HCT116 (cell line): ENCODE measurements at regions of chr4 and their contacts with region 1.

Region 1: GRCh38 chr4:85798012-85798770 is 323.2 kb downstream of the ARHGAP24 start:
- DNase-seq: no peak
- ATAC-seq: no peak
- H3K4me3 ChIP-seq: no peak overlapping the region
- H3K27ac ChIP-seq: no peak overlapping the region
- H3K4me1 ChIP-seq: peaks cover 0 to 4% of the 10 kb centered on the region in 2 experiments; a peak in 3 of 4 replicates
- H3K27me3 ChIP-seq: no peaks in the 10 kb centered on the region
- CTCF ChIP-seq: no peak
- POLR2A ChIP-seq: no peak
- RAD21 ChIP-seq: no peak

Region 2: DNA sequence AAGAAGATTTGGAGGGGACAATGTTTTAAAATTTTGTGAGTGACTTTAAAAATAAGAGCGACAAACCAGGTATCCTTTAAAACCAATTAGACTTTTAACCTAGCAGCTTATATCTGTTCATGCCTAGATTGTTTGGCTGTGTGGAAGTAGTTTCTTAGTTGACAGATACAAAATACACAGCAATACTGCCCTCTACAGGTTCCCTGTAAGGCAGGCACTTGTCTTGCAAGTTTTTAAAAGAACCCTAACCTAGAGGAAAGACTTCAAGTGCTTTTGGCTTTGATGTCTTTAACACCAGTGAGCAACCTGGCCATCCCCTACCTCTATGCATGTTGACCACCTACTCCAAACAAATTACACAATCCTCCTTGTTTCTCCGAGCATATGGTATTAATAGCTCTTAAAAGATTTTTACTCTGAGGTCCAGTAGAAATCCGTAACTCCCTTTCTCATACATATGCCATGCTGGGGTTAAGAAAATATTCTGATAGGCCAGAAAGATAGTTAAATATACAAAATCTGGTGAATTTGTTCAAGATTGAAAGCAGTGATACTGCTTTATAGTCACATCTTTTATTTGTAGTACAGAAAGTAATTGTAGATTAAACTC is 50.2 kb before region 1 on chr4:
- CTCF ChIA-PET with region 1: interaction called, 13 read pairs
- POLR2A ChIA-PET with region 1: no interaction called
- RAD21 ChIA-PET with region 1: no interaction called
- intact Hi-C with region 1: no loop called
- DNase-seq: peak; percentile 73
- ATAC-seq: peak; percentile 74
- H3K4me3 ChIP-seq: no peak overlapping the region
- H3K27ac ChIP-seq: no peak overlapping the region
- H3K4me1 ChIP-seq: peaks cover 17 to 28% of the 10 kb centered on the region in 2 experiments
- H3K27me3 ChIP-seq: no peaks in the 10 kb centered on the region
- CTCF ChIP-seq: peak; percentile 67 to 90 (median 76)
- POLR2A ChIP-seq: no peak
- RAD21 ChIP-seq: peak; percentile 88

Region 3: GRCh38 chr4:85787138-85787537 is 11.1 kb before region 1 on chr4:
- CTCF ChIA-PET with region 1: interaction called, 31 read pairs
- POLR2A ChIA-PET with region 1: no interaction called
- RAD21 ChIA-PET with region 1: no interaction called
- intact Hi-C with region 1: no loop called
- DNase-seq: no peak
- ATAC-seq: no peak
- H3K4me3 ChIP-seq: no peak overlapping the region
- H3K27ac ChIP-seq: no peak overlapping the region
- H3K4me1 ChIP-seq: no peaks in the 10 kb centered on the region
- H3K27me3 ChIP-seq: no peaks in the 10 kb centered on the region
- CTCF ChIP-seq: no peak
- POLR2A ChIP-seq: no peak
- RAD21 ChIP-seq: no peak

Region 4: DNA sequence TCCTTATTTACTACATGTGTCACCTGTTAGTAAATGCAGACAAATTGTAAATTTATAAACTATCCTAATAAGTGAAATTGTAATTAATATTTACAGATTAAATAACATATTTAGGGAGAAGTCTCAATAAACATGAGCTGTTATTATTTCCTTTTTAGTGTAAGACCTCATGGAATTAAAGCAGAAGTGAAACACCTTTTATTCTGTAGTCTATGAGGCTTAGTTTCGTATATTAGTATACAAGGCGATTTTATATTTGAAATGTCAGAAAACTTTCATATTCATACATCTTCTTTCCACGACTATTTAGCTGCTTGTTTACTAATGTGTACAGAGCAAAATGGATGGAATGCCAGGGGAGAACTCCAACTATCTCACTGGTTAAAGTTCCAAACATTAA is 91.1 kb after region 1 on chr4:
- CTCF ChIA-PET with region 1: no interaction called
- POLR2A ChIA-PET with region 1: no interaction called
- RAD21 ChIA-PET with region 1: no interaction called
- intact Hi-C with region 1: no loop called
- DNase-seq: no peak
- ATAC-seq: no peak
- H3K4me3 ChIP-seq: no peak overlapping the region
- H3K27ac ChIP-seq: no peak overlapping the region
- H3K4me1 ChIP-seq: no peaks in the 10 kb centered on the region
- H3K27me3 ChIP-seq: no peaks in the 10 kb centered on the region
- CTCF ChIP-seq: no peak
- POLR2A ChIP-seq: no peak
- RAD21 ChIP-seq: no peak

Region 5: DNA sequence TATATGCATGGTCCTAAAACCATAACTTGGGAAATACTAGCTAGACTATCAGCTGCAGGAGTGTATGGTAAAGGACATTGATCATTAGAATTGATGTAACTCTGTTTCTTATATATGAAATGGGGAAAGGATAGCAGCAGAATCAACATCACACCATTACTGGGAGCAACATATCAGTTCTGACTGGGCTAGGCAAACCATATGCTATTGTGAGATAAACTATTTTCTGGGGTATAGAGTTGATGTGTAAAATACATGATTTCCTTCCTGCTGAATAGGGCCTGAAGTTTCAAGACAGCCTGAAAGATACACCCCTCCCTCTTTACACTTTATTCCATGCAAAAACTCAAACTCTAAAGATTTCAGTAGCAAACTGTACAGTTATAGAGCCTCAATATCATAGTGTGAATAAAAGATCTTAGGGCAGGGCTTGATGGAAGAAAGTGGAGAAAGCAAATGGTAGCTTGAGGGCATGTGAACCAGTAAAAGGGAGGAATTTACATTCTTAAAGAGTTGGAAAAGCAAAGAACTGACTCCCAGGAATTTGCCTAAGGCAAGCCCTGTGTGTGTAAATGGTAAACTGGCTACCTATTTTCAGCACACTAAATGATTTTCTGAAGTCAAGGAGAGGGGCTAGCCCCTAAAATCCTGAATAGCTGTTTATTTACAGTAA is 157.6 kb after region 1 on chr4:
- CTCF ChIA-PET with region 1: interaction called, 12 read pairs
- POLR2A ChIA-PET with region 1: no interaction called
- RAD21 ChIA-PET with region 1: no interaction called
- intact Hi-C with region 1: no loop called
- DNase-seq: no peak
- ATAC-seq: no peak
- H3K4me3 ChIP-seq: no peak overlapping the region
- H3K27ac ChIP-seq: no peak overlapping the region
- H3K4me1 ChIP-seq: peaks cover 13 to 23% of the 10 kb centered on the region in 2 experiments
- H3K27me3 ChIP-seq: no peaks in the 10 kb centered on the region
- CTCF ChIP-seq: no peak
- POLR2A ChIP-seq: no peak
- RAD21 ChIP-seq: no peak

Region 6: GRCh38 chr4:85993641-85994040 is 195.4 kb after region 1 on chr4:
- CTCF ChIA-PET with region 1: no interaction called
- POLR2A ChIA-PET with region 1: no interaction called
- RAD21 ChIA-PET with region 1: no interaction called
- intact Hi-C with region 1: no loop called
- DNase-seq: no peak
- ATAC-seq: no peak
- H3K4me3 ChIP-seq: no peak overlapping the region
- H3K27ac ChIP-seq: no peak overlapping the region
- H3K4me1 ChIP-seq: no peaks in the 10 kb centered on the region
- H3K27me3 ChIP-seq: no peaks in the 10 kb centered on the region
- CTCF ChIP-seq: no peak
- POLR2A ChIP-seq: no peak
- RAD21 ChIP-seq: no peak

Region 7: GRCh38 chr4:86043755-86044592 is 245.8 kb after region 1 on chr4:
- CTCF ChIA-PET with region 1: interaction called, 61 read pairs
- POLR2A ChIA-PET with region 1: interaction called, 3 read pairs
- RAD21 ChIA-PET with region 1: interaction called, 3 to 17 read pairs
- intact Hi-C with region 1: loop called (anchors 1 kb)
- DNase-seq: peak; percentile 37
- ATAC-seq: peak; percentile 84
- H3K4me3 ChIP-seq: no peak overlapping the region; a peak in 1 of 4 replicates
- H3K27ac ChIP-seq: no peak overlapping the region
- H3K4me1 ChIP-seq: peaks cover 0 to 4% of the 10 kb centered on the region in 2 experiments; a peak in 1 of 4 replicates
- H3K27me3 ChIP-seq: no peaks in the 10 kb centered on the region
- CTCF ChIP-seq: peak; percentile 39 to 68 (median 61)
- POLR2A ChIP-seq: no peak
- RAD21 ChIP-seq: peak; percentile 78

Region 8: GRCh38 chr4:86264241-86264640 is 466.1 kb after region 1 on chr4:
- CTCF ChIA-PET with region 1: no interaction called
- POLR2A ChIA-PET with region 1: no interaction called
- RAD21 ChIA-PET with region 1: no interaction called
- intact Hi-C with region 1: no loop called
- DNase-seq: no peak
- ATAC-seq: no peak
- H3K4me3 ChIP-seq: no peak overlapping the region
- H3K27ac ChIP-seq: no peak overlapping the region
- H3K4me1 ChIP-seq: no peaks in the 10 kb centered on the region
- H3K27me3 ChIP-seq: no peaks in the 10 kb centered on the region
- CTCF ChIP-seq: no peak
- POLR2A ChIP-seq: no peak
- RAD21 ChIP-seq: no peak